Head of caudate nucleus (tissue), 42 donors: ENCODE measurements at regions of chr10 and their contacts with region 1.

Region 1: DNA sequence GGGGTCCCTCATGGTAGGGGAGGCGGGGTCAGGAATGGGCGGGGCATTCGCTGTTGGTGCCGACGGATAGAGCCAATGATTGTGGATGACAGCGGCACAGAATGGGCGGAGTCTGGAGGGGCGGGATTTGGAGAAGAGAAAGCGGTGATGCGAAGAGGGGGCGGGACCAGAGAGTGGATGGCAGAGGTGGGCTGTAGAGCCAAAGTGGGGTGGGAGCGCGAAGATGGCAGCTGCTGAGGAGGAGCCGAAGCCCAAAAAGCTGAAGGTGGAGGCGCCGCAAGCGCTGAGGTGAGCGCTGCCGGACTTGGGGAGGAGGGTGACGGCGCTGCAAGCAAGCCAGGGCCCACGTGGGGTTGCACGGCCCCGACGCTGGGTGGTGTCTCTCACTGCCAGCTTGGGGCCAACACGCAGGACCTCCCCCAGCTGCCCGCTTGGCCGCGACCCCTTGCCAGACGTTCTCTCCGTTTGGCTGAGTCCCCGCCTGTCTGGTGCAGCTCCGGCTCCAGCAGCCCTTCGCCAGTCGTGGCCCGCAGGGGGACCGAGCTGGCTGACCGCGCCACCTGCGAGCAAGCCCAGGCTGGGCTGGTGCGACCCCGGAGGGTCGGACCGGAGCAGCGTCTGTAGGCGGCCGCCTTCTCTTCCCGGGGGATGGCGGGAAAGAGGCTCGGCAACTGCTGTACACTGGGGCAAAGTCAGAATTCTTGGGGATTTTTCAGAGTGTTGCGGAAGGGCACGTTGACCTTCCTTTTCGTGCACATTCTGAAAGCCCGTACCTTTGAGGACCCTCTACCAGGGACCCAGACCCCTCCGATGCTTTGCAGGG is at the start of gene ADK:
- DNase-seq: peak; percentile 98 to 100 (median 99)

Region 2: GRCh38 chr10:74176380-74177139 is 25.3 kb after region 1 on chr10:
- intact Hi-C with region 1: loop called (anchors 2 kb)
- DNase-seq: peak; percentile 86 to 97 (median 94)